ENCODE measurements at regions of chrX and their contacts with region 1.

Region 1: DNA sequence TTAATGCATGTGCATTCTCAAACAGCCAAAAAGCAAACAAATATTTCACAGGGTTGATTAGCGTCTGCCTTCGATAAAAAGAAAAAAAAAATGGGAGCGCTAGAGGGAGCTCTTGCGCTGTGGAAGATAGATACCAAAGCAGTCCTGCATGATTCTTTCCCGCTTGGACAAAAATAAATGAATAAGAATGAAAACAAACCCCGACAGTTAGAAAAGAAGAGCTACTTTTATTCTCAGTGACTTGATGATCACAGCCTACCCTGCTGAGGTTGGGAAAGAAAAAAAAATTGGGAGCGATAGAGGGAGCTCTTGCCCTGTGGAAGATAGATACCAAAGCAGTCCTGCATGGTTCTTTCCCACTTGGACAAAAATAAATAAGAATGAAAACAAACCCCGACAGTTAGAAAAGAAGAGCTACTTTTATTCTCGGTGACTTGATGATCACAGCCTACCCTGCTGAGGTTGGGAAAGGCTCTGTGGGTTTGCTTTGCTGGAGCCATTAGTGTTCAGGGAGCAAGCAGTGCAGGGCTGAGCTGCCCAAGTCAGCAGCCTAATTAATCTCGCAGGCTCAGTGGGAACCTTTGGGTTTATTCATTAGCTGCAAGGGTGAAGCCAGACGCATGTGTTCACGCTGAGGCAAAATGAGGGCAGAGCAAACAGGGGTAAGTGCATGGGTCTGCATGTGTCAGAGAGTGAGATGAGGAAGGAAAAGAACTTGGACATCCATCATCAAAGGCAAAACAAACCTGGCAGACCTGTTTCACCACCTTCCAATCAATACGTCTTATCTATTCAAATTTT is 249.3 kb upstream of the PRKX start:
- DNase-seq: peak; percentile 64
- ATAC-seq: peak; percentile 48
- H3K4me3 ChIP-seq: peak overlapping the region; percentile 54
- H3K27ac ChIP-seq: no peak overlapping the region
- H3K4me1 ChIP-seq: no peaks in the 10 kb centered on the region
- H3K27me3 ChIP-seq: peaks cover 13% of the 10 kb centered on the region
- CTCF ChIP-seq: peak; percentile 85

Region 2: DNA sequence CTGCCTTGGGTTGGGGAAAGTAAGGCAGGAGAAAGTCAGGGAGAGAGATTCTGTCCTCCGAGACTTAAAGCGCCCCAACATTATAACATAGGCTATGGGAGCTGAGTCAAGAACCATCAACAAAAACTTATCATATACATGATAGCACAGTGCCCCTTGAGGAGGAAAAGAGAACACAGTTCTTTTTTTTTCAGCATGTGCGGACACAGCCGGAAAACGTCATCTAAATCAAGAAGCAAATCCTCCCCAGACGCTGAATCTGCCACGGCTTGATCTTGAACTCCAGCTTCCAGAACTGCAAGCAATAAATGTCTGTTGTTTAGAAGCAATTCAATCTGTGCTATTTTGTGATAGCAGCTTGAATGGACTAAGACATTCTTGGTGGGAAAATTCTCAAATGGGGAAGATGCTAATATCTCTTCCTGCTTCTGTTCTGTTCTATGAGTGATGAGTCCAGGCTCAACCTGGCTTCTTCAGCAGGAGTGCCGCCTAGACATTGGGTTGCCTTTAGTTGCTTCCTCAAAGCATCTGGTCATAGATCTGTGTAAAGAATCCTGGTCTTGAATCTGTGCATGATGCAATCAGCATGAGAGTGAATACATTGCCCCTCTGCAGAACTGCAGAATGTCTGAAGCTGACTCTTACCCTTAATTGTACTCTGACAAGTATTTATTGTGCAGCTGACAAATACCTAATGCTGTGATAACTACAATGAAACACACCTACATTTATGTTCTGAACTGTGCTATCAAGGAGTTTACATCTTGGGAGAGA is 300.5 kb after region 1 on chrX:
- CTCF ChIA-PET with region 1: no interaction called
- POLR2A ChIA-PET with region 1: no interaction called
- intact Hi-C with region 1: loop called (anchors 5 kb)
- DNase-seq: peak; percentile 52
- ATAC-seq: peak; percentile 22; the same call in 1 of the 2 replicates
- H3K4me3 ChIP-seq: no peak overlapping the region
- H3K27ac ChIP-seq: no peak overlapping the region
- H3K4me1 ChIP-seq: no peaks in the 10 kb centered on the region
- H3K27me3 ChIP-seq: no peaks in the 10 kb centered on the region
- CTCF ChIP-seq: peak; percentile 58

Region 3: GRCh38 chrX:5876984-5877596 is 1914.4 kb after region 1 on chrX:
- CTCF ChIA-PET with region 1: no interaction called
- POLR2A ChIA-PET with region 1: no interaction called
- intact Hi-C with region 1: loop called (anchors 5 kb)
- DNase-seq: peak; percentile 47
- ATAC-seq: no peak; the same call in 1 of the 2 replicates
- H3K4me3 ChIP-seq: no peak overlapping the region
- H3K27ac ChIP-seq: no peak overlapping the region
- H3K4me1 ChIP-seq: no peaks in the 10 kb centered on the region
- H3K27me3 ChIP-seq: peaks cover 20% of the 10 kb centered on the region
- CTCF ChIP-seq: peak; percentile 68

Measured in PC-3 (cell line).